WTC11 (cell line): ENCODE measurements at regions of chr16 and their contacts with region 1.

Region 1: DNA sequence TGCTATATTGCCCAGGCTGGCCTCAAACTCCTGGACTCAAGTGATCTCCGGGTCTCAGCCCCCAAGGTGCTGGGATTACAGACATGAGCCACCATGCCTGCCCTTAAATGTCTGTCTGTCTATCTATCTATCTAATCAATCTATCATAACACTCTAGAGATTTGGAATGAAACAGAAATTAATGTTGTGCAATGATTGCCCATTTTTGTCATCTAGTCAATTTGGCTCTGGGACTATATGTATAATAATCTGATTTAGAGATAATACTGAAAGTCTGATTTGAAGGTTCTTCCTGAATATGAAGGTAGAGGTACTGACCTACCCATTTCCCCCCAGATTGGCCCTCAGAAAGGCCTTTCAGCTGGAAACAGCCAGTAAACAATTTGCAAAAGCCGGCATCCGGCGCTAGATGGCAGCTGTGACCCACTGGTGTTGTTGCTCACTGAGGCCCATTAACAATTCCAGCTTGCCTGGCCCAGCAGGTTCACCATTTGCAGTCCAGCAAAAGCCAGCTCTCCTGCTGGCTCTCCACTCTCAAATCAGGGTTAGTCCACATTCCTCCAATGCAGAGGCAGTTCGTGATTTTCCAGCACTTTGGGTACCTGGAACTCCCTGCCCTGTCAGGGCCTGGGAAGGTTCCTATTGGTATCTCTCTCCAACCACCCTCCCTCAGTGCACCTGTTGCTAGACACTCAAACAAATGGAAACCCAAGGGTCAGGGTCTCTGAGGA is 22.9 kb upstream of the C16orf87 start:
- DNase-seq: peak; percentile 90
- ATAC-seq: peak; percentile 87
- H3K4me3 Mint-ChIP-seq: no peak overlapping the region
- H3K27ac Mint-ChIP-seq: peak overlapping the region; percentile 85; the same call in 1 of the 2 replicates
- H3K4me1 Mint-ChIP-seq: peaks cover 27% of the 10 kb centered on the region
- H3K27me3 Mint-ChIP-seq: no peaks in the 10 kb centered on the region
- CTCF ChIP-seq: peak; percentile 46

Region 2: DNA sequence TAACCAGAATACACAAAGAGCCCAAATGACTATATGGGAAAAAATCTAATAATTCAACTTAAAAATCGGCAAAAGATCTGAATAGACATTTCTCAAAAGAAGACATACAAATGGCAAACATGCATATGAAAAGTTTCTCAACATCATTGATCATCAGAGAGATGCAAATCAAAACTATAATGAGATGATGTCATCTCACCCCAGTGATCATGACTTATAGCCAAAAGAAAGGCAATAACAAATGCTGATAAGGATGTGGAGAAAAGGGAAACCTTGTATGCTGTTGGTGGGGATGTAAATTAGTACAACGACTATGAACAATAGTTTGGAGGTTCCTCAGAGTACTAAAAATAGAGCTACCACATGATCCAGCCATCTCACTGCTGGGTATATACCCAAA is 340.9 kb before region 1 on chr16:
- CTCF ChIA-PET with region 1: no interaction called
- POLR2A ChIA-PET with region 1: no interaction called
- DNase-seq: no peak
- ATAC-seq: no peak
- H3K4me3 Mint-ChIP-seq: no peak overlapping the region
- H3K27ac Mint-ChIP-seq: no peak overlapping the region
- H3K4me1 Mint-ChIP-seq: no peaks in the 10 kb centered on the region
- H3K27me3 Mint-ChIP-seq: peaks cover 15% of the 10 kb centered on the region; the same call in 1 of the 2 replicates
- CTCF ChIP-seq: no peak

Region 3: GRCh38 chr16:46830902-46831647 is 22.8 kb before region 1 on chr16 and contains the start of gene C16orf87:
- CTCF ChIA-PET with region 1: interaction called, 14 read pairs
- POLR2A ChIA-PET with region 1: no interaction called
- DNase-seq: peak; percentile 91
- ATAC-seq: peak; percentile 97
- H3K4me3 Mint-ChIP-seq: peak within 1 kb of the TSS; percentile 100
- H3K27ac Mint-ChIP-seq: peak within 1 kb of the TSS; percentile 98
- H3K4me1 Mint-ChIP-seq: peaks cover 28% of the 10 kb centered on the region
- H3K27me3 Mint-ChIP-seq: peaks cover 6% of the 10 kb centered on the region
- CTCF ChIP-seq: no peak
- total RNA-seq, gene C16orf87: 21.8 to 22.5 TPM (median 22.5 TPM) in 3 replicates

Region 4: GRCh38 chr16:46899443-46900143 is 45.7 kb after region 1 on chr16:
- CTCF ChIA-PET with region 1: interaction called, 146 read pairs
- POLR2A ChIA-PET with region 1: interaction called, 3 read pairs
- DNase-seq: no peak
- ATAC-seq: no peak
- H3K4me3 Mint-ChIP-seq: no peak overlapping the region
- H3K27ac Mint-ChIP-seq: no peak overlapping the region
- H3K4me1 Mint-ChIP-seq: peaks cover 9% of the 10 kb centered on the region
- H3K27me3 Mint-ChIP-seq: no peaks in the 10 kb centered on the region
- CTCF ChIP-seq: no peak

Region 5: DNA sequence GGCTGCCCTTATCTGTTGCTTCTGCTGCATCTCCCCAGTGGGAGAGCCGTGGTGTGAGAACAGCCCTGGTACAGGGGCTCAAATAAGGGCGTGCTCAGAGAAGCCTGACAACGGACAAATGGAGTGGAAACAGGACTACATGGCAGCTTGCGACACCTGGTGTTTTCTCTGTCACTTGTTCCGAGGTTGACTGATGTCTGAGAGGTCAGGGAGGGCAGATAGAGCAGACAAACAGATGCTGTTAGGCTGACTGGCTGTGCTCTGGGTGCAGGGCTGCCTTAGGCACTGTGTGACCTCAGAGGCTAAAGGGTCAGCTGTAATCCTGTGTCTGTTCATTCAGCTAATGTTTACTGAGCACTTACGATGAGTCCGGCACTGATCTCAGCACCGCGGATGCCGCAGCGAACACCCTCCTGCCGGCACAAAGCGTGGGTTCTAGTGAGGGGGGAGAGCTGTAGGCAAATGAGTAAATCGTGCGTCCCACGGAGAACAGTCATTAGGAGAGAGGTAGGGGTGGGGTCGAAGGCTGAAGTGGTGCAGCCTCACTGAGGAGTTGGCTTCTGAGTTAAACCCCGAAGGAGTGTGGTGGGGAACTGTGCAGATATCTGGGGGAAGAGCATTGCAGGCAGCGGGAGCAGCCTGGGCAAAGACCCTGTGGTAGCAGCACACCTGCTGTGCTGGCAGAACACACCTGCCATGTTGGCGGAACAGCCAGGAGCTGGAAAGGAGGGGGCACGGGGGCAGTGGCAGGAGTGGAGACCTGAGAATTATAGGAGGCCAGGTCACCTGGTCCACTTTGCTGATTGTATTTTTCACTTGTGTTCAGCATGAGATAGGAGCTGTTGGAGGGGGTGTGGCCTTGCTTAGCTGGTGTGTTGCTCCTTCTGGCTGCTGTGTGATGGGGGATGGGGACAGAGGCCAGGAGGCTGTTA is 65.2 kb after region 1 on chr16:
- CTCF ChIA-PET with region 1: interaction called, 12 read pairs
- POLR2A ChIA-PET with region 1: no interaction called
- DNase-seq: no peak
- ATAC-seq: no peak
- H3K4me3 Mint-ChIP-seq: no peak overlapping the region
- H3K27ac Mint-ChIP-seq: peak overlapping the region; percentile 71
- H3K4me1 Mint-ChIP-seq: no peaks in the 10 kb centered on the region
- H3K27me3 Mint-ChIP-seq: no peaks in the 10 kb centered on the region
- CTCF ChIP-seq: no peak

Region 6: GRCh38 chr16:46947900-46948547 is 94.1 kb after region 1 on chr16:
- CTCF ChIA-PET with region 1: interaction called, 13 read pairs
- POLR2A ChIA-PET with region 1: no interaction called
- DNase-seq: peak; percentile 24
- ATAC-seq: peak; percentile 83
- H3K4me3 Mint-ChIP-seq: no peak overlapping the region
- H3K27ac Mint-ChIP-seq: no peak overlapping the region
- H3K4me1 Mint-ChIP-seq: peaks cover 4% of the 10 kb centered on the region; the same call in 1 of the 2 replicates
- H3K27me3 Mint-ChIP-seq: no peaks in the 10 kb centered on the region
- CTCF ChIP-seq: peak; percentile 52

Region 7: DNA sequence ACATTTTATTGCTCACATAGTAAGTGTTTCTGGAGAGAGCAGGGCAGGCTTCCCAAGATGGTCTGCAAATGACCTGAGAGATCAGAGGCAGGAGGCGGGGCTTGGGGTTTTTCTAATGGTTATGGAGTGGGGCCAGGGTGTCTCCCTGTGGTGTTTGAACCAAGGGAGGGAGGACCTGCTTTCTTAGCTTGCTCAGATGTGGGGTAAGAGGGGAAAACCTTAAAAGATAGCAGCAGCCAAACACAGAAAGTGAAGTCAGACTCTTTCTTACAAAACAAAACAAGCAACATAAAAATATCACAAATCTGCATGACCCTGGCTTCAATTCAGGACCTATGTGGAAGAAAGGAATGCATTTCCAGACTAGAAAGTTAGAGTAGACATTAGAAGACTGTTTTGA is 142.5 kb after region 1 on chr16:
- CTCF ChIA-PET with region 1: no interaction called
- POLR2A ChIA-PET with region 1: no interaction called
- DNase-seq: peak; percentile 35
- ATAC-seq: peak; percentile 50
- H3K4me3 Mint-ChIP-seq: no peak overlapping the region
- H3K27ac Mint-ChIP-seq: no peak overlapping the region
- H3K4me1 Mint-ChIP-seq: peaks cover 7% of the 10 kb centered on the region
- H3K27me3 Mint-ChIP-seq: no peaks in the 10 kb centered on the region
- CTCF ChIP-seq: no peak

Region 8: GRCh38 chr16:47028767-47029377 is 175.0 kb after region 1 on chr16:
- CTCF ChIA-PET with region 1: no interaction called
- POLR2A ChIA-PET with region 1: no interaction called
- DNase-seq: no peak
- ATAC-seq: no peak
- H3K4me3 Mint-ChIP-seq: no peak overlapping the region
- H3K27ac Mint-ChIP-seq: no peak overlapping the region
- H3K4me1 Mint-ChIP-seq: peaks cover 3% of the 10 kb centered on the region; the same call in 1 of the 2 replicates
- H3K27me3 Mint-ChIP-seq: no peaks in the 10 kb centered on the region
- CTCF ChIP-seq: no peak